H1 (cell line): ENCODE measurements at regions of chr4 and their contacts with region 1.

Region 1: DNA sequence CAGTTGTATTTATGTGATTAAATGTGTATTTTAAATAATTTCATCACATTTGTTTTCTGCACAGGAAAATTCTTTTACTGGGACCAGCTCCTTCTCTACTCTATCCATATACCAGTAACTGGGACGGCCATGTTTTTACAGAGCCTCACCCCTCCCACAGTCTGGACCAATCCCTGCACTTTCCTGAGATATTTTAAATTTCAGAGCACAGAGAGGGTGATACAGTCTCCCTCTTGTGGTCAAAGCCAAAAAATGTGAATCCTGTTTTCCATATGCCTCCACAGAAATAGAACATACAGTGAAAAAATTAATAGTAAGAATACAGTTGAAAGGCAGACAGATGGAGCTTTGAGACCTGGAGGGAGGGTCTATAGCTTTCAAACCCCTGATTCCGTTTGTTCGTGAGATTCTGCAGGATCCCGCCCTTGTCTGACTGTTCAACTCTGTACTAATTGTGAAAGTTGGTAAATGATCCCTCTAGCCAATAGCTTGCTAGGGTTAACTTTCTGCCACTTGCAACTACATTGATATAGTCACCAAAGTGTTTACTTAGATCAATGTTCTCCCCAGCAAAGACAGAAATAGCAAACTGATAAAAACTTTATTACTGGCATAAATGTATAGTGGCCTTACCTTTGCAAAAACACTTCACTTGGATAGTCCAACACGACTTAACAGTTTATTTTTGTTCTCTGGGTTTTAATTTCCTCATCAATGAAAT is 172.2 kb downstream of the PPARGC1A start:
- DNase-seq: no peak
- H3K4me3 ChIP-seq: no peak overlapping the region
- H3K27ac ChIP-seq: no peak overlapping the region
- H3K4me1 ChIP-seq: no peaks in the 10 kb centered on the region
- H3K27me3 ChIP-seq: no peaks in the 10 kb centered on the region
- CTCF ChIP-seq: peak in 2 of 3 experiments; percentile 40 to 41; a peak in 3 of 4 replicates
- EP300 ChIP-seq: no peak
- POLR2A ChIP-seq: no peak
- RAD21 ChIP-seq: peak; percentile 47 to 48

Region 2: DNA sequence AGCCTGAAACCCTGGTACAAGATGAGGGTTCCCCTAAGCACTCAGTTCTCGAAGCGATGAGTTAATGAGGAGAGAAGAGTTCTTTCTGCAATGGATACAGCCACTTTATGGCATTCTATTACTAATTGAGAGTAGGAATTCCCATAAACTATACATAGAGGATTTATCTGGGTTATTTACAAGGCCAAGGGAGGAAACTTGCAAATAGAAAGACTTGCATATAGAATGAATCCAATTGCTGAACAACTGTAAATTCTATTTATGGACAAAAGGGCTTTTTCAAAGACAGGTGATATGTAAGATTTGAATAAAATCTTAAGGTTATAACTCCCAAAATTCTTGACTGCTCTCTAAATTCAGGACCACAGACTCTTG is 10.0 kb before region 1 on chr4:
- CTCF ChIA-PET with region 1: interaction called, 12 read pairs
- POLR2A ChIA-PET with region 1: no interaction called
- DNase-seq: no peak
- H3K4me3 ChIP-seq: no peak overlapping the region
- H3K27ac ChIP-seq: no peak overlapping the region
- H3K4me1 ChIP-seq: no peaks in the 10 kb centered on the region
- H3K27me3 ChIP-seq: no peaks in the 10 kb centered on the region
- CTCF ChIP-seq: no peak
- EP300 ChIP-seq: no peak
- POLR2A ChIP-seq: no peak
- RAD21 ChIP-seq: no peak